CD8-positive, alpha-beta T cell (primary cell): ENCODE measurements at regions of chr3 and their contacts with region 1.

Region 1: GRCh38 chr3:141738022-141738890 is at the start of gene RNF7:
- DNase-seq: peak; percentile 95 to 99 (median 97)
- ATAC-seq: peak; percentile 94
- H3K4me3 ChIP-seq: peak within 1 kb of the TSS; percentile 82 to 95
- H3K4me3 Mint-ChIP-seq: peak within 1 kb of the TSS; percentile 97
- H3K27ac ChIP-seq: peak within 1 kb of the TSS; percentile 82 to 90
- H3K27ac Mint-ChIP-seq: peak within 1 kb of the TSS; percentile 98
- H3K4me1 ChIP-seq: peaks cover 31% of the 10 kb centered on the region
- H3K4me1 Mint-ChIP-seq: peaks cover 36% of the 10 kb centered on the region
- H3K27me3 ChIP-seq: no peaks in the 10 kb centered on the region
- H3K27me3 Mint-ChIP-seq: no peaks in the 10 kb centered on the region
- CTCF ChIP-seq: peak; percentile 70
- total RNA-seq, gene RNF7: 82.8 to 83.9 TPM

Region 2: DNA sequence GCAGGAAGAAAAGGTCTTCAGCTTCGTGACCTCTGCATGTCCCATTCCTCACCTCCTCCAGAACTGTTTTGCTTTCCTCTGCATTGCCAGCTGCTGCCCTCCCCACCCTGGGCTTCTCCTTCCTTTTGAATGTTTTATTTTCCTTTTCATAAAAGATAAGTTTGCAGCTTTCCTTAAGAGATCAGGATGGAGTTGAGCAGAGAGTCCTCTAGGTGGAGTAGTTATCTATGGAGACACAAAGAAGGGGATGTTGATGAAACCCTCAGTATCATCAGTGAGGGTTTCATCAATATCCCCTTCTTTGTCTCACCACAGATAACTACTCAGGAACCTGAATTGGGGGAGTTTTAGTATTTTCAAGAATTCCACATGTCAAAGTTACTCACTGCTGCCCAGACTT is 815.6 kb before region 1 on chr3:
- CTCF ChIA-PET with region 1: no interaction called
- POLR2A ChIA-PET with region 1: no interaction called
- intact Hi-C with region 1: no loop called
- DNase-seq: peak in 2 of 9 experiments; percentile 26 to 43
- ATAC-seq: peak; percentile 55
- H3K4me3 ChIP-seq: no peak overlapping the region
- H3K4me3 Mint-ChIP-seq: no peak overlapping the region
- H3K27ac ChIP-seq: no peak overlapping the region
- H3K27ac Mint-ChIP-seq: no peak overlapping the region
- H3K4me1 ChIP-seq: no peaks in the 10 kb centered on the region
- H3K4me1 Mint-ChIP-seq: no peaks in the 10 kb centered on the region
- H3K27me3 ChIP-seq: peaks cover 0 to 2% of the 10 kb centered on the region in 2 experiments
- H3K27me3 Mint-ChIP-seq: peaks cover 9% of the 10 kb centered on the region
- CTCF ChIP-seq: peak; percentile 44

Region 3: GRCh38 chr3:141231101-141231935 is 506.9 kb before region 1 on chr3 and contains the start of gene PXYLP1:
- CTCF ChIA-PET with region 1: no interaction called
- POLR2A ChIA-PET with region 1: no interaction called
- intact Hi-C with region 1: loop called in 1 of 2 experiments (anchors 5 kb)
- DNase-seq: peak; percentile 78 to 95 (median 89)
- ATAC-seq: peak; percentile 90
- H3K4me3 ChIP-seq: peak within 1 kb of the TSS; percentile 89 to 94
- H3K4me3 Mint-ChIP-seq: peak within 1 kb of the TSS; percentile 91
- H3K27ac ChIP-seq: peak within 1 kb of the TSS; percentile 87 to 94
- H3K27ac Mint-ChIP-seq: peak within 1 kb of the TSS; percentile 98
- H3K4me1 ChIP-seq: peaks cover 42% of the 10 kb centered on the region
- H3K4me1 Mint-ChIP-seq: peaks cover 51% of the 10 kb centered on the region
- H3K27me3 ChIP-seq: no peaks in the 10 kb centered on the region
- H3K27me3 Mint-ChIP-seq: no peaks in the 10 kb centered on the region
- CTCF ChIP-seq: peak; percentile 66
- total RNA-seq, gene PXYLP1: 14.5 to 21.8 TPM

Region 4: DNA sequence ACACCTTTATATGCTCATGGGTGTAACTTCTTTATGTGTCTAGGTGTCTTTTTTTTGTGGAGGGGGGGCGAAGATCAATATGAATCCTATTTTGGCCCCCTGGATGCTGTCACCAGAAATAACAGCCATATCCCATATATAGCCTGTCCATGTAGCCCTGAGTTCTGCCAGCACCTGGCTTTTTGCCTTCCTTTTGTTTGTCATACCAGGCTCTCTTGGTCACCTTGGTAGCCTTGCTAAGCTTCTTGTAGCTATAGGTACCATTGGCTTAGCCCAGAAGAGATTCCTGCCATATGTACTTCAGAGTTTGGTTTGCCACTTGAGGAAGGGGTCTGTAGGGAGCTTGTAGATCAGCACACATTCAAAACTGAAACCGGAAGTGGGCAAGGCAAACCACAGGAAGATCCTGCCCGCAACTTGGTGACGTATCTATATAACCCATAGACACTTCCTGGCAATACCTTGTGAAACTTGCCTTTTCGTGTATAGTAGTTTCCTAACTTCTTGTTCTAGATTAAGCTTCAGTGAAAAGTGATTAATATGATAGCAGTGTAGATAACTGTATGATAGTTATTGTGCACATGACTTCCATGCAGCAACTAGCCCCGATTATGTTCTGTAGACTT is 239.5 kb before region 1 on chr3:
- CTCF ChIA-PET with region 1: no interaction called
- POLR2A ChIA-PET with region 1: no interaction called
- intact Hi-C with region 1: loop called in 1 of 2 experiments (anchors 1 kb)
- DNase-seq: peak; percentile 66 to 98 (median 86)
- ATAC-seq: peak; percentile 82
- H3K4me3 ChIP-seq: peak overlapping the region; percentile 31 to 44
- H3K4me3 Mint-ChIP-seq: peak overlapping the region; percentile 76
- H3K27ac ChIP-seq: peak overlapping the region; percentile 73 to 96
- H3K27ac Mint-ChIP-seq: peak overlapping the region; percentile 94
- H3K4me1 ChIP-seq: peaks cover 82% of the 10 kb centered on the region
- H3K4me1 Mint-ChIP-seq: peaks cover 68% of the 10 kb centered on the region
- H3K27me3 ChIP-seq: no peaks in the 10 kb centered on the region
- H3K27me3 Mint-ChIP-seq: no peaks in the 10 kb centered on the region
- CTCF ChIP-seq: no peak

Region 5: GRCh38 chr3:141686466-141687291 is 51.6 kb before region 1 on chr3:
- CTCF ChIA-PET with region 1: no interaction called
- POLR2A ChIA-PET with region 1: no interaction called
- intact Hi-C with region 1: no loop called
- DNase-seq: peak in 2 of 9 experiments; percentile 10 to 24
- ATAC-seq: peak; percentile 31
- H3K4me3 ChIP-seq: peak overlapping the region; percentile 4 to 41
- H3K4me3 Mint-ChIP-seq: peak overlapping the region; percentile 73
- H3K27ac ChIP-seq: peak overlapping the region in 1 of 2 experiments; percentile 50
- H3K27ac Mint-ChIP-seq: peak overlapping the region; percentile 47
- H3K4me1 ChIP-seq: no peaks in the 10 kb centered on the region
- H3K4me1 Mint-ChIP-seq: peaks cover 20% of the 10 kb centered on the region
- H3K27me3 ChIP-seq: no peaks in the 10 kb centered on the region
- H3K27me3 Mint-ChIP-seq: no peaks in the 10 kb centered on the region
- CTCF ChIP-seq: no peak

Region 6: DNA sequence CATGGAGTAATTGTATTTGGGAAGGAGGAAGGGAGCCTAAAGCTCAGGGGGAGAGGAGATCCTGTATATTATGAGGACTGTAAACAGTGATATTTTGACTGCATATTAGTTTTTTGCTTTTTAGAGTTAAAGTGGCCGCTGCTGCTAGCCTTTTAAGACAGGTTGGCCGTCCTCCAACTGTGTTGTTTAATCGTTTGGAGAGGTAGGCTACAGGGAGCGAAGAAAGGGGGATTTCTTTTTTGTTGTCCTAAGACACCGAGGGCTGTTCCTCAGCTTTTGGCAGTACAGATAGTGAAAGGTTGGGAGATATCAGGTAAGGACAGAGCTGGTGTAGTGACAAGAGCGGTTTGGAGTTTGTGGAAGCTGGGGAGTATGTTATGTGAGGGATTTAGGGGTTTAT is 38.4 kb before region 1 on chr3:
- CTCF ChIA-PET with region 1: no interaction called
- POLR2A ChIA-PET with region 1: no interaction called
- intact Hi-C with region 1: no loop called
- DNase-seq: no peak
- ATAC-seq: no peak
- H3K4me3 ChIP-seq: no peak overlapping the region
- H3K4me3 Mint-ChIP-seq: no peak overlapping the region
- H3K27ac ChIP-seq: no peak overlapping the region
- H3K27ac Mint-ChIP-seq: no peak overlapping the region
- H3K4me1 ChIP-seq: no peaks in the 10 kb centered on the region
- H3K4me1 Mint-ChIP-seq: no peaks in the 10 kb centered on the region
- H3K27me3 ChIP-seq: no peaks in the 10 kb centered on the region
- H3K27me3 Mint-ChIP-seq: peaks cover 3% of the 10 kb centered on the region
- CTCF ChIP-seq: no peak

Region 7: DNA sequence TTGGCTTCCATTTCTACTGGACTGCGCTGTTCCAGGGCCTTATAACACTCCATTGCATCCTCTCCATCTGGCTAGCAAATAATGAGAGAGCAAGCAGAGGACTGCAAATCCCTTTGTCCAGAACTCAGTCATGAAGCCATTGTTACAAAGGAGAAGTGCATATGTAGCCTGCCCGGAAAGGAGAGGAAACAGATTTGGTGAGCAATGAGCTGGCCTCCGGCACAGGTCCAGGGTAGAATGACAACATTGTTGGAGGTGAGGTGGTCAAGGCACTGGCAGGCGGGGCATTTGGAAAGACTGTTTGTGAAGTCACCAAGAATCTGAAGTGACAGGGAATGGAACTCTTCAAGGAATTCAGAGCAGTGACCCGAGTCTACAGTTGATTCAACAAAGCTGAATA is 113.2 kb after region 1 on chr3:
- CTCF ChIA-PET with region 1: interaction called, 10 read pairs
- POLR2A ChIA-PET with region 1: interaction called, 4 read pairs
- intact Hi-C with region 1: no loop called
- DNase-seq: no peak
- ATAC-seq: no peak
- H3K4me3 ChIP-seq: no peak overlapping the region
- H3K4me3 Mint-ChIP-seq: no peak overlapping the region
- H3K27ac ChIP-seq: no peak overlapping the region
- H3K27ac Mint-ChIP-seq: no peak overlapping the region
- H3K4me1 ChIP-seq: no peaks in the 10 kb centered on the region
- H3K4me1 Mint-ChIP-seq: no peaks in the 10 kb centered on the region
- H3K27me3 ChIP-seq: no peaks in the 10 kb centered on the region
- H3K27me3 Mint-ChIP-seq: peaks cover 4% of the 10 kb centered on the region
- CTCF ChIP-seq: no peak

Region 8: GRCh38 chr3:142226484-142226883 is 488.2 kb after region 1 on chr3:
- CTCF ChIA-PET with region 1: no interaction called
- POLR2A ChIA-PET with region 1: no interaction called
- intact Hi-C with region 1: loop called in 1 of 2 experiments (anchors 1 kb)
- DNase-seq: no peak
- ATAC-seq: no peak
- H3K4me3 ChIP-seq: no peak overlapping the region
- H3K4me3 Mint-ChIP-seq: peak overlapping the region; percentile 62
- H3K27ac ChIP-seq: no peak overlapping the region
- H3K27ac Mint-ChIP-seq: no peak overlapping the region
- H3K4me1 ChIP-seq: peaks cover 4% of the 10 kb centered on the region
- H3K4me1 Mint-ChIP-seq: peaks cover 17% of the 10 kb centered on the region
- H3K27me3 ChIP-seq: no peaks in the 10 kb centered on the region
- H3K27me3 Mint-ChIP-seq: no peaks in the 10 kb centered on the region
- CTCF ChIP-seq: no peak

Region 9: DNA sequence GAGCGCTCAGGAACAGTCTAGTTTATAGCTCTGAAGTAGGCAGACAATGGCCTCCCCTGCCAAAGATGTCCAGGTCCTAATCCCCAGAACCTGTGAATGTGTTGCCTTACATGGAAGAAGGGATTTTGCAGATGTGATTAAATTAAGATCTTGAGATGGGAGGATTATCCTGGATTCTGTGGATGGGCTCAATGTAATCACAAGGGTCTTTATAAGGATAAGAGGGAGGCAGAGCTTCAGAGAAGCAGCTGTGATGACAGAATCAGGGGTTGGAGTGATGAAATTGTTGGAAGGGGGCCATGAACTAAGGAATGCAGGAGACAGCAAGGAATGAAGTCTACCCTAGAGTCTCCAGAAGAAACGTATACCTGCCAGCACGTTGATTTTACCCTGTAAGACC is 501.2 kb after region 1 on chr3:
- CTCF ChIA-PET with region 1: no interaction called
- POLR2A ChIA-PET with region 1: no interaction called
- intact Hi-C with region 1: no loop called
- DNase-seq: no peak
- ATAC-seq: no peak
- H3K4me3 ChIP-seq: no peak overlapping the region
- H3K4me3 Mint-ChIP-seq: no peak overlapping the region
- H3K27ac ChIP-seq: no peak overlapping the region
- H3K27ac Mint-ChIP-seq: no peak overlapping the region
- H3K4me1 ChIP-seq: no peaks in the 10 kb centered on the region
- H3K4me1 Mint-ChIP-seq: no peaks in the 10 kb centered on the region
- H3K27me3 ChIP-seq: no peaks in the 10 kb centered on the region
- H3K27me3 Mint-ChIP-seq: peaks cover 15% of the 10 kb centered on the region
- CTCF ChIP-seq: no peak

Region 10: DNA sequence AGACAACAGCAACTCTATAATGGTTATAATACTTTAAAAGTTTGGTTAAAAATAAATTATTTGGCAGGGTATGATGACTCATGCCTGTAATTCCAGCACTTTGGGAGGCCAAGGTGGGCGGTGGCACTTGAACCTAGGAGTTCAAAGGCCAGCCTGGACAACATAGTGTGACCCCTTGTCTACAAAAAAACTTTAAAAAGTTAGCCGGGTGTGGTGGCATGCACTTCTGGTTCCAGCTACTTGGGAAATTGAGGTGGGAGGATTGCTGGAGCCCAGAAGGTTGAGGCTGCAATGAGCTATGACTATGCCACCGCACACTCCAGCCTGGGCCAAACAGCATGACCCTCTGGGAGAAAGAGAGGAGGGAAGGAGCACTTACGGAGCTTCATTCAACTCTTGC is 977.8 kb after region 1 on chr3:
- CTCF ChIA-PET with region 1: no interaction called
- POLR2A ChIA-PET with region 1: no interaction called
- intact Hi-C with region 1: loop called in 1 of 2 experiments (anchors 10 kb)
- DNase-seq: no peak
- ATAC-seq: no peak
- H3K4me3 ChIP-seq: no peak overlapping the region
- H3K4me3 Mint-ChIP-seq: no peak overlapping the region
- H3K27ac ChIP-seq: no peak overlapping the region
- H3K27ac Mint-ChIP-seq: no peak overlapping the region
- H3K4me1 ChIP-seq: no peaks in the 10 kb centered on the region
- H3K4me1 Mint-ChIP-seq: no peaks in the 10 kb centered on the region
- H3K27me3 ChIP-seq: peaks cover 0 to 3% of the 10 kb centered on the region in 2 experiments
- H3K27me3 Mint-ChIP-seq: peaks cover 49% of the 10 kb centered on the region
- CTCF ChIP-seq: no peak